Mammary epithelial cell (primary cell): ENCODE measurements at regions of chr1 and their contacts with region 1.

Region 1: DNA sequence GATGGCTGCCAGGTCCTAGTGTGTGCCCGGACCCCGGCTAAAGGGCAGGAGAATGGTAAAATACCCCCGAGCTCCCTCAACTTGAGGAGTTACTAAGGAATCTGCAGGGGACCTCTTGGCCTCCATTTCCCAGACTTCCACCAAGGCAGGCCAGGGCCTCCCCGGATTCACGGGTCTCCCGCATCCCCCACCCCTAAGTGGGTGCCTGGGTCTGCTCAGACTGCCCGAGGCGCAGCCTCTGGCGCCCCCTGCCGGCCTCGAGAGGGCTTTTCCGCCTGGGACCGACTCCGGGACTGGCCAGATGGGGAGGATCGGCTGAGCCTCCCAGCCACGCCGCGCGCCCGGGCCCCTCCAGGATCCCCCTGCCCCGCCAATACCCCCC is 1.7 kb downstream of the PLEKHG5 start:
- DNase-seq: peak; percentile 80
- H3K4me3 ChIP-seq: peak overlapping the region; percentile 84 to 93 (median 92)
- H3K27ac ChIP-seq: peak overlapping the region; percentile 96
- H3K4me1 ChIP-seq: peaks cover 69% of the 10 kb centered on the region
- H3K27me3 ChIP-seq: no peaks in the 10 kb centered on the region
- CTCF ChIP-seq: peak; percentile 68 to 92

Region 2: DNA sequence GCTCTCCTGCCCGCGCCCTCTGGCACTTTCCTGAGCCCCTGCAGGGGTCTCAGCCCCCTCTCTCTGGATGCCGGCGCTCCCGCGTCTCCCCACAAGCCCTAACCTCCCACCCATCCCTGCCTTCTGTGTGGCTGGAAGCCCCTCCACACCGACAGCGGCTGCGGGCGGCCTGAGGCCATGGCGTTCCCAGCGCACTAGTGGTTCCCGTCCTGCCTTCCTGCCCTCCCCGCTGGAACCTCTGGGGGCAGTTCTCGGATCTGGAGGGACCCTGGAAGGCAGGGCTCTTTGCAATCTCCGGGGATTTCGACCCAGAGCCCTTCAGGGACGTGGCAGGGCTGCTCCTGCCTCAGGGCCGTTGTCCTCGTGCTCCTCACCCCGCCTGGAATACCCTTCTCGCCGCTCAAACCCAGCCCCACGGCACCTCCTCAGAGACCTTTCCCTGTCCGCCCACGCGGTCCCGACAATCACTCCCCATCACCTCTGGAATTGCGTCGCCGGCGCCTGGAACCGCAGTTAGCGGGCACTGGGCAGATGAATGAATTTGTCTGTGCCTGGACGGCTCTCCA is 65.7 kb before region 1 on chr1:
- CTCF ChIA-PET with region 1: no interaction called
- dilution Hi-C with region 1: no loop called
- in situ Hi-C with region 1: no loop called
- intact Hi-C with region 1: no loop called
- DNase-seq: no peak
- H3K4me3 ChIP-seq: no peak overlapping the region
- H3K27ac ChIP-seq: peak overlapping the region; percentile 18
- H3K4me1 ChIP-seq: peaks cover 68% of the 10 kb centered on the region
- H3K27me3 ChIP-seq: no peaks in the 10 kb centered on the region
- CTCF ChIP-seq: peak in 1 of 2 donors; percentile 23

Region 3: DNA sequence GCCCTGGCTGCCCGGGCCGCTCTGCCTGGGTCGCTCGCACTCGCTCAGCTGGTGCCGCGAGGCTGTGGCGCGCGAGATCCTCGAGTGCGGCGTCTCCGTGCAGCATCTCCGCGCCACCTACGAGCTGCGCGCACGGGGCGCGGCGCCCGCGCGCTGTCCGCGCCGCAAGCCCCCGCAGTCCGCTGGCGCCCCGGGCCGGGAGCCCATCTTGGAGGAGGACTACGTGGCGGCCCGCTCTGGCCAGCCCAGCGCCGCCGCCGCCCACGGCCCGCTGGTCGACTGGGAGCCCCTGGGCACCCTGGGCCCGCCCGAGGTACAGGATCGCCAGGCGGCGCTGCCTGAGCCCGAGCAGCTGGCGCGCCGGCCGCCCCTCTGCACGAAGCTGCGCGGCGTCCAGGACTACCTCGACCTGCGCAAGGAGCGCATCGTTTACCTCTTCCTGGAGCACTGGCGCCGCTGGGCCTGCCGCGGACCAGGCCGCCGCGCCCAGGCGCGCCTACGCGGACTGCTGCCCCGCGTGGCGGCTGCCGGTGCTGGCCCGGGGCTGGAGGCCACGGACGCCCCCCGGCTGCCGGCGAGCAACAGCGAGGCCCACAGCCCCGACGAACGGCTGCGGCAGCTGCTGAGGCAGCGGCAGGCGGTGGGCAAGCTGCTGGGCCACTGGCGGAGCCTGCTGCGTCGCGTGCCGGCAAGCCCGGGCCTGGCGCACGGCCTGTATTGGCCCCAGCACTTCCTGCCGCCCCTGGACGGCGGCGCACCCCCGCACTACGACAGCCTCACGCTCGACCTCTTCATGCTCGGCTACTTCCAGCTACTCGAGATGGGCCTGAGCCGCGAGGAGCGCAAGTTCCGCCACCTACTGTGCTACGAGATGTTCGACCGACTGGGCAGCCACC is 34.7 kb before region 1 on chr1:
- CTCF ChIA-PET with region 1: no interaction called
- dilution Hi-C with region 1: loop called (anchors 5 kb)
- in situ Hi-C with region 1: no loop called
- intact Hi-C with region 1: no loop called
- DNase-seq: no peak
- H3K4me3 ChIP-seq: no peak overlapping the region
- H3K27ac ChIP-seq: no peak overlapping the region
- H3K4me1 ChIP-seq: no peaks in the 10 kb centered on the region
- H3K27me3 ChIP-seq: peaks cover 12% of the 10 kb centered on the region
- CTCF ChIP-seq: no peak

Region 4: DNA sequence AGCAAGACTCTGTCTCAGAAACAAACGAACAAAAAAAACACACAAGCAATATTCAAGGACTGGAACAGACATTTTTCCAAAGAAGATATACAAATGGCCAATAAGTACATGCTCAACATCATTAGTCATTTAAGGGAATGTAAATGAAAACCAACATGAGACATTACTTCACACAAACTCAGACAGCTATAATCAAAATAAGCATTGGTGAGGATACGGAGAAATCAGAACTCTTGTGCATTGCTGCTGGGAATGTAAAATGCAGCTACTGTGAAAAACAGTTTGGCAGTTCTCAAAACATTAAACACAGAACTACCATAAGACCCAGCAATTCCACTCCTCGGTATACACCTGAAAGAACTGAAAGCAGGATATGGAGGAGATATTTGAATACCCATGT is 49.2 kb after region 1 on chr1:
- CTCF ChIA-PET with region 1: no interaction called
- dilution Hi-C with region 1: loop called (anchors 5 kb)
- in situ Hi-C with region 1: no loop called
- intact Hi-C with region 1: no loop called
- DNase-seq: no peak
- H3K4me3 ChIP-seq: no peak overlapping the region
- H3K27ac ChIP-seq: no peak overlapping the region
- H3K4me1 ChIP-seq: no peaks in the 10 kb centered on the region
- H3K27me3 ChIP-seq: no peaks in the 10 kb centered on the region
- CTCF ChIP-seq: no peak

Region 5: DNA sequence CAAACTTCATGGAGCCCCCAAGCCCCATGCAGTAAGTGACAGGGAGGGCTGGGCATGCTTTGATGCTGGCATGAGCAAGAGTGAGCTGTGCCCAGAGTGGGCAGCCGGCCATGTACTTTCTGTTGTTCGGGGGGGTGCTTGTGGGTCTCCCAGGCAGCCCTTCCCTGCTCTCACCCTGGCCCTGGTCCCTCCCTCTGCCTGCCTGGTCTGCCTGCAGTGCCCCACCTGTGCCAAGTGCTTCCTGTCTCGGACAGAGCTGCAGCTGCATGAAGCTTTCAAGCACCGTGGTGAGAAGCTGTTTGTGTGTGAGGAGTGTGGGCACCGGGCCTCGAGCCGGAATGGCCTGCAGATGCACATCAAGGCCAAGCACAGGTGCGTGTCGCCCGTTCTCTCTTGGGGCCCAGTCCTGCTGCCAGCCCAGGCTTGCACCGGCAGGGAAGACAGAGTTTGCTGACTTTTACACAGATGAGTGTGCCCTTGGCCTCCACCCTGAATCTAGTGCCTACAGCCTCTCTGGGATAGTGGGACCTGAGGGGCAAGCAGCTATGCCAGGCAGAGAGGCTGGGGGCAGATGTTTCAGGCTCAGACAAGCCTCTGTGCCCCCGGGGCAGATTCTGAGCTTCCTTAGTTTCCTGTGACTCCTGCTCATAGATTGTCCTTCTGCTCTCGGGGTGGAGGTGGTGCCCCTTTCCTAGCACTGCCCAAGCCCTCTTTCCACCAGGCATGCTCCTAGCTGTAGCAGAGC is 97.6 kb after region 1 on chr1:
- CTCF ChIA-PET with region 1: no interaction called
- dilution Hi-C with region 1: loop called (anchors 5 kb)
- in situ Hi-C with region 1: no loop called
- intact Hi-C with region 1: no loop called
- DNase-seq: peak; percentile 63
- H3K4me3 ChIP-seq: no peak overlapping the region
- H3K27ac ChIP-seq: peak overlapping the region; percentile 13
- H3K4me1 ChIP-seq: peaks cover 34% of the 10 kb centered on the region
- H3K27me3 ChIP-seq: no peaks in the 10 kb centered on the region
- CTCF ChIP-seq: no peak

Region 6: GRCh38 chr1:6624710-6625583 is 135.2 kb after region 1 on chr1 and contains the start of gene THAP3:
- CTCF ChIA-PET with region 1: no interaction called
- dilution Hi-C with region 1: no loop called
- in situ Hi-C with region 1: no loop called
- intact Hi-C with region 1: loop called (anchors 5 kb)
- DNase-seq: peak; percentile 81
- H3K4me3 ChIP-seq: peak within 1 kb of the TSS; percentile 75 to 81 (median 78)
- H3K27ac ChIP-seq: peak within 1 kb of the TSS; percentile 44
- H3K4me1 ChIP-seq: peaks cover 7% of the 10 kb centered on the region
- H3K27me3 ChIP-seq: no peaks in the 10 kb centered on the region
- CTCF ChIP-seq: no peak
- total RNA-seq, gene THAP3: 7.2 to 11.4 TPM

Region 7: DNA sequence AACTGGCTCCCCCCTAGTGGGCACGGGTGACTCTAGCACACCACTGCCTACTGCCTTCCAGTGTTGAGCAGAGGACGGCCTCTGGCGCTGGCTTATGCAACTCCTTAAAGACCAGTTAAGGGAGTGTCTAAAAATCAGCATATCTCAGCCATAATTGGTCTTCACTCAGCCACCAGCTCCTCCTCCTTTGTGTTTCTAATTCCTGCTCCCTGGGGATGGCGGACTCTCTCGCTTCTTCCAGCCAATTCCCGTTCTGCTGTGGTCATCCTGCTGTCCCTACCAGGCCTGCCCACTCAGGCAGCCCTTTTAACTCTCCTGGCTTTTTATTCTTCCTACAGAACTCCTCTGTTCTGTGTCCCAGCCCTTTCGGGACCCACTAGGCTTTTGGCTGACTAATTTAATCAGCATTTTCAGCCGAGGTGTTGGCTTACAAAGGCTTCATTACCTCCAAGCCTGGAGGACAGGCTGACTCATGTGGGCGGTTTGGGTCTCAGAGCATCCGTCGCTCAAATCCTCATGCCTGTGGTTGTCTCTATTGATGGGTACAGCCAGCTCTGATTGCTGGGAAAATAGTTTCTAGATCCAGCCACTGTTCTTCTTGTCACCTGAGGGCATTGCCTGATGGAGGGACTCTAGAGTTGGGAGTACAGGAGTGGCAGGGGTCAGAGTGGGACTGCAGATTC is 628.0 kb after region 1 on chr1:
- CTCF ChIA-PET with region 1: no interaction called
- dilution Hi-C with region 1: no loop called
- in situ Hi-C with region 1: no loop called
- intact Hi-C with region 1: loop called (anchors 5 kb)
- DNase-seq: peak; percentile 87
- H3K4me3 ChIP-seq: peak overlapping the region; percentile 19 to 47 (median 32)
- H3K27ac ChIP-seq: peak overlapping the region; percentile 93
- H3K4me1 ChIP-seq: peaks cover 30% of the 10 kb centered on the region
- H3K27me3 ChIP-seq: no peaks in the 10 kb centered on the region
- CTCF ChIP-seq: peak; percentile 52 to 56